ENCODE measurements at regions of chr20 and their contacts with region 1.

Region 1: DNA sequence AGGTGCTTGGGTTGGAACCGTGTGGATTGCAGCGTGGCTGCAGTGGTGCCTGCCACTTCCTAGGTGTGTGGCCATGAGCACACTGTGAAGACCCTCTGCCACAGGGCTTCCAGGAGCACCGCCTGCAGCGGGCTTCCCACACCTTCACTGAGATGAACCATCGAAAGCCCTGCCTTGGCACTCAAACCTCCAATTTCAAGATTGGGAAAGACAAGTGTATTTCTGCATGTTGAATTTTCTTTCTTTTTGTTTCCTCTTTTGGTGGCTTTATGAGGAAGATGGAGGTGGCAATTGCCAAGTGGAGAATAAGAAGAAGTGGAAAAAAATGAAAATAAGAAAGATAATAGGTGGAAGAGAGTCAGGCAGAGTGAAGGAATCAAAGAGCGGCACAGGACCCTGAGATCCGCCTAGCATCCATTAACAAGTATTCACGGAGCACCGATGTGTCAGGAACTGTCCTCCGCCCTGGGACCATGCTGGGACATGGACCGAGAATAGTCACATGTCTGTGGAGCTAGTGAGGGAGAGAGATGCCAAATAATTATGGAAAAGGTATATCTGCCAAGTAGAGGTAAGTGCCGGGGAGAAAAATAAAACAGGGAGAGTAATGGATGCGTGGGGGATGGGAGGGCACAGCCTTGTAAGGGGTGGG is 159.9 kb downstream of the BCAS1 start:
- DNase-seq: no peak
- H3K4me3 ChIP-seq: no peak overlapping the region
- H3K27ac ChIP-seq: no peak overlapping the region
- H3K4me1 ChIP-seq: peaks cover 69% of the 10 kb centered on the region
- CTCF ChIP-seq: no peak

Region 2: DNA sequence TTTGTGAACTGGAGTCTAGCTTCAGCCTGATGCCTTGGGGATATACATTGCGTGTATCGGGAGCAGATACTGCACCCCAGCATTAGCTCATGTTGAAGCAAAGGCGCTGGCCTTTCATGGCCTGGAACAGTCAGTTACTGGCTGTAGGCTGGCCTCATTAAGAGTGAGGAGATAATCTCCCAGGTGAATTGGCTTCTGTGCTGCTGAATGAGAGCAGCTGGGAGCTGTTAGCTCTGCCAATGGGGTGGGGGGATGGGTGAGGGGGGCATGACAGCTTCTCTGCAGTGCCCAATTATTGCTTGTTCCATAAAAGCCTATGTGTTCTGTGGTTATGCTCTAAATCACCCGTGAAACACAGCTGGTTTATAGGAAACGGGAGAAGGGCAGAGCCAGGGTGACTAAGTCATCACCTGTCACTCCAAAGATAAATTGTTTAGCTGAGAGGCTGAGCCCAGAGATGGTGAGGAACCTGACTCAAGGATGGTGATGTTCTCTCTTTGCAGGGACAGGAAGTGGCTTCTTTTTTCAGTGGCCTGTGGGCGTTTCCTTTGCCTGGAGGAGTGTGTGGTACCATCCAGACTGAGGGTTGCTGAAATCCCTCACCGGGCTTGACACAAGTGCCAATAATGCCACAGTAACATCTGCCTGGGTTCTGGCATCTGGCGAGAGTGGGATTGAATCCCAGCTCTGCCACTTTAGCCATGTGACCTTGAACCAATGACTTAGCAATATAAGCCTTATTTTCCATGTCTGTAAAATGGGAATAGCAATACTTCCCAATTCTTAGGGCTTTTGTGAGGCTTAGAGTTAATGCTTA is 10.9 kb before region 1 on chr20:
- CTCF ChIA-PET with region 1: interaction called, 13 read pairs
- POLR2A ChIA-PET with region 1: interaction called, 98 read pairs
- intact Hi-C with region 1: loop called (anchors 1 kb)
- DNase-seq: peak; percentile 93
- H3K4me3 ChIP-seq: peak overlapping the region; percentile 47
- H3K27ac ChIP-seq: peak overlapping the region; percentile 94
- H3K4me1 ChIP-seq: peaks cover 84% of the 10 kb centered on the region
- CTCF ChIP-seq: no peak

Region 3: DNA sequence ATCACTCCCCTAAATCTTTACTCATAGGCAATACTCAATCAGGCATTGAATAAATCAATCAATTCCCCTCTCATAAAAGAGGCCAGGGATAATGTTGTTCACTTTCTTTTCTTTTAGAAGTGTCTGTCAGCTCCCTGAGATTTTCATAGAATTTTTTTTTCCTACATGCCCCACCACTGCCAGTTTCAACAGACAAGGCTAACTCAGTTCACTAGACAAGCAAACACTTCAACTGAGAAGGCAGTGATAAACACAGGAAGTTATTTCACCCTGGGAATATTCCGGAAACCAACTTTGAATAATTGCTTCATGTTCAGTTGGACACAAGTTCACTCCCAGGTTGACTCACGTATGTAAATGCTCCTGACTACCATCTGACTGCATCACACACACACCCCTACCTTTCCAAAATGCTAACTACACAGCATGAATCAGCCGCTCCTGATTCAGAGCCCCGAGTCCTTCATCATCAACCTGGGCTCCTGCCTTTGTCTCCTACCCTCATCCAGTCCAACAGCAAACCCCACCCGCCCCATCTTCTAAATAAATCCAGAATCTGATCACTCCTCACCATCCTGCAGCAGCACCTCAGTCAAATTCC is 16.1 kb after region 1 on chr20:
- CTCF ChIA-PET with region 1: interaction called, 4 read pairs
- POLR2A ChIA-PET with region 1: interaction called, 83 read pairs
- intact Hi-C with region 1: no loop called
- DNase-seq: peak; percentile 95
- H3K4me3 ChIP-seq: peak overlapping the region; percentile 59
- H3K27ac ChIP-seq: peak overlapping the region; percentile 99
- H3K4me1 ChIP-seq: peaks cover 95% of the 10 kb centered on the region
- CTCF ChIP-seq: no peak

Region 4: GRCh38 chr20:54590889-54591288 is 680.4 kb after region 1 on chr20:
- CTCF ChIA-PET with region 1: no interaction called
- POLR2A ChIA-PET with region 1: no interaction called
- intact Hi-C with region 1: no loop called
- DNase-seq: no peak
- H3K4me3 ChIP-seq: no peak overlapping the region
- H3K27ac ChIP-seq: no peak overlapping the region
- H3K4me1 ChIP-seq: no peaks in the 10 kb centered on the region
- CTCF ChIP-seq: no peak

Measured in OCI-LY7 (cell line).